Esophagus muscularis mucosa (tissue), 4 donors: ENCODE measurements at regions of chr5 and their contacts with region 1.

Region 1: GRCh38 chr5:81751009-81751835 is at the start of gene SSBP2:
- DNase-seq: peak; percentile 100
- H3K4me3 ChIP-seq: peak within 1 kb of the TSS; percentile 87 to 93 (median 93)
- H3K27ac ChIP-seq: peak within 1 kb of the TSS; percentile 96 to 100 (median 98)
- H3K4me1 ChIP-seq: peaks cover 35 to 81% (median 76%) of the 10 kb centered on the region in 4 donors
- H3K27me3 ChIP-seq: no peaks in the 10 kb centered on the region
- CTCF ChIP-seq: no peak
- EP300 ChIP-seq: peak; percentile 22
- POLR2A ChIP-seq: peak; percentile 77
- total RNA-seq, gene SSBP2: 62.9 to 97.2 (median 74.2) TPM

Region 2: GRCh38 chr5:81301271-81302015 is 449.8 kb before region 1 on chr5 and contains the start of gene ZCCHC9:
- intact Hi-C with region 1: loop called (anchors 10 kb)
- DNase-seq: peak; percentile 98
- H3K4me3 ChIP-seq: peak within 1 kb of the TSS; percentile 73 to 90 (median 78)
- H3K27ac ChIP-seq: peak within 1 kb of the TSS; percentile 87 to 92 (median 92)
- H3K4me1 ChIP-seq: peaks cover 17 to 49% (median 43%) of the 10 kb centered on the region in 4 donors
- H3K27me3 ChIP-seq: no peaks in the 10 kb centered on the region
- CTCF ChIP-seq: peak; percentile 14 to 38 (median 26)
- EP300 ChIP-seq: no peak
- POLR2A ChIP-seq: no peak
- total RNA-seq, gene ZCCHC9: 18.7 to 38.6 (median 22.8) TPM

Region 3: DNA sequence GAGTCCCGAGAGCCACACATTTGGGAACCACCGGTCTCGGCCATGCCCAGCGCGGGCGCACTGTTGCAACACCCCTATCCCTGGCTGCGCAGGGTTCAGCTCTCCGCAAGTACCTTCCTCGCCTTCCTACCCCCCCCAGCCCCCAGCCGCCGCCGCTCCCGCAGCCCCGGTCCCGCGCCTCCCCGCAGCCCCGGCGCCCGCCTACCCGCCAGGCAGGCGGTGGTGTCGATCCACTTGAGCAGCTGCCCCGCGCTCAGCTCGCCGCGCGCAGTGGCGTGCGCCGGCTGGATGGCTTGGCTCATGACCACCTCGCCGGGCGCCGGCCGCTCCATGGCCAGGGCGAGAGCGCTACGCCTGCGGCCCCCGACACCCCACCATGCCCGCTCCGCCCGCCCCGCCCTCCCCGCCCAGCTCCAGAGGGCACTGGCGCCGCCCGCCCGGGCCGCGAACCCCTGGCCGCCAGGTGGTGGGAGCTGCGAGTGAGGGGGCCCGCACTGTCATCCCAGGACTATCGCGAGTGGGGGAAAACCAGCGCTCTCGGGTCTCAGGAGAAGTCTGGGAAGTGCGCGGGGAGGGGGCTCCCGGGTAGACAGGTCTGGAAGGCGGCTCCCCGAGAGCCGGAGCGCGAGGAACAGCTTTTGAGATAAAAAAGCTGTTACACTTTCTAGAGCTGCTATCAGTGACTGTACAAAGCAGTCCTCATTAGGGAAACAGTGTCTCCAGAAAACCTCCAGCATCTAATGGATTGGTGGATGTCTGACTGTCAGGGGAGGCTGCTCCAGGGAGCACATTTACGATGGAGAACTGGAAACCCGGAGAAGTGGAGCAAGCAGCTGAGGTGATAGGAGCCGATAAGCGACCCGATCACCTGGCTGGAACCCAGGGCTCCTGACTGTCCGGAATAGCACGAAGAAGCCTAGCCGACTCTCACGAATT is 357.2 kb before region 1 on chr5 and contains the start of gene ACOT12:
- intact Hi-C with region 1: no loop called
- DNase-seq: no peak
- H3K4me3 ChIP-seq: peak within 1 kb of the TSS; percentile 44 to 62 (median 51)
- H3K27ac ChIP-seq: no peak within 1 kb of the TSS
- H3K4me1 ChIP-seq: peaks cover 10 to 18% (median 15%) of the 10 kb centered on the region in 4 donors
- H3K27me3 ChIP-seq: peaks cover 0 to 65% (median 24%) of the 10 kb centered on the region in 4 donors
- CTCF ChIP-seq: no peak
- EP300 ChIP-seq: no peak
- POLR2A ChIP-seq: no peak
- total RNA-seq, gene ACOT12: not detected

Region 4: GRCh38 chr5:81425569-81425968 is 325.7 kb before region 1 on chr5:
- intact Hi-C with region 1: loop called (anchors 5 kb)
- DNase-seq: no peak
- H3K4me3 ChIP-seq: no peak overlapping the region
- H3K27ac ChIP-seq: peak overlapping the region in 3 of 4 donors; percentile 25 to 43 (median 28)
- H3K4me1 ChIP-seq: peaks cover 15 to 27% (median 20%) of the 10 kb centered on the region in 4 donors
- H3K27me3 ChIP-seq: no peaks in the 10 kb centered on the region
- CTCF ChIP-seq: peak; percentile 62 to 64 (median 64)
- EP300 ChIP-seq: no peak
- POLR2A ChIP-seq: no peak

Region 5: GRCh38 chr5:81506900-81507588 is 244.2 kb before region 1 on chr5:
- intact Hi-C with region 1: loop called (anchors 2 kb)
- DNase-seq: no peak
- H3K4me3 ChIP-seq: no peak overlapping the region
- H3K27ac ChIP-seq: peak overlapping the region in 3 of 4 donors; percentile 8 to 34 (median 29)
- H3K4me1 ChIP-seq: peaks cover 10 to 25% (median 19%) of the 10 kb centered on the region in 4 donors
- H3K27me3 ChIP-seq: no peaks in the 10 kb centered on the region
- CTCF ChIP-seq: peak; percentile 88 to 94 (median 90)
- EP300 ChIP-seq: no peak
- POLR2A ChIP-seq: no peak

Region 6: DNA sequence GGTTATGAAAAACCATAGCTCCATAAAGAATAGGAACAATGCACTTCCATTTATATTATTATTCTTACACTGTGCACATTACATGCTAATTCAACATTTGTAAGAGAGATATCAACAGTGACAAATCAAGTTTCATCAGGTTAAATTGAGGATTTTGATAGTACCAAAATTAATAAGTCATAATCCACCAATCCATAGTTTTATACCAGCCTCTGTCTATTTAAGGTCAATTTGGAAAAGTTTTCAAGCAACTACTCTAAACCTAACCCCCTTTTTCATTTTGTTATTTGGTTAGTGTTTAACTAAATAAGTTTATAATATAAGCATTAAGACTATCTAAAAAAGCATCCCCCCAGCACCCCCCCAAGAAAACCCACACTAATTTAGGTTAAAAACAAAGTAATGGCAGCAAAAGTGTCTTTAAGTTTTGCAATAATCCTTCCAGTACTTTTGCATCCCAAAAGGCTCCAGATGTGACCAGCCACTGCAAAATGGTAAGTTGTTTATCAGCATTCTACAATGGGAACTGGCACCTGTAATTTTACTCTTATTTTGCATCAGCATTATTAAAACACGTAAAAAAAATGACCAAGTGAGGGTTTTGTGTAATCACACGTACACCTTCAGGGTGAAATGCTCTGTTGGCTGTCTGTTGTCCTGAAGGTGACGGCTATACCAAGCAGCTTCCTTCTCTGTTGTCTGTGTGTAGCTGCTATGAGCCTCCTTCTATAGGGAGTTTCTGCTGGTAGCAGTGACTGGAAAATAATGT is 36.4 kb after region 1 on chr5:
- intact Hi-C with region 1: loop called (anchors 2 kb)
- DNase-seq: no peak
- H3K4me3 ChIP-seq: peak overlapping the region; percentile 8 to 35 (median 22)
- H3K27ac ChIP-seq: peak overlapping the region; percentile 41 to 71 (median 58)
- H3K4me1 ChIP-seq: peaks cover 20 to 38% (median 36%) of the 10 kb centered on the region in 4 donors
- H3K27me3 ChIP-seq: no peaks in the 10 kb centered on the region
- CTCF ChIP-seq: no peak
- EP300 ChIP-seq: no peak
- POLR2A ChIP-seq: no peak

Region 7: DNA sequence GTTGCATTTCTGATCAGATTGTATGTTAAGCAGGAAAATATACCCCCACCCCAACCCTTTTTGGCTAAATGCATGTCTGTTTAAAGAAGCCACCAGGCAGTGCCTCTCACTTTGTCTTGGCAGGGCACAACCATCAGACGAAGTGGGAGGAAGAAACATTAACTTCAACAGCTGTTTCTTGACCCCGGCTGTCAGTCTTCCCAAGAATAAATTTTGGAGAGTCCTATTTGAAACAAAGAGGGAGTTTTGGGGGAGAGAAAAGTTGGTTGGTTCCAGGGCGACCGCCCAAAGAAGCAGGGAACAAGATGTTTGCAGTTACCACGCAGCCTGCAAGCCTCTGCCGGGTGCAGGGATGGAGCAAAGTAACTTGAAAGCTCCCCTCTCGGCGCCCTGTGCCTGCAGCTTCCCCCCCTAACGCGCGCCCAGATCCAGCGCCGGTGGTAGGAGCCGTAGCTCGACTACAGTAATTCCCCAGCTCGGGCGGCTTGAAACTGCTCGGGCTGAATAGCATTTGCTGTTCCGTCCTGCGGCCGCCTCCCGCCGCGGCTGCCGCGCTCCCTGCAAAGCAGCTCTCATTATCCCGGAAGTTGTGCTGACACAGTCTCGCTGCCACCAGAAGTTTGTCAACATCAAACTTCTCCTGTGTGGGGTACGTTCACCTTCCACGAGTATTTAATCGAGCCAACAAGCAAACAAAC is 100.4 kb after region 1 on chr5:
- intact Hi-C with region 1: loop called (anchors 1 kb)
- DNase-seq: peak; percentile 97
- H3K4me3 ChIP-seq: peak overlapping the region; percentile 52 to 67 (median 58)
- H3K27ac ChIP-seq: peak overlapping the region; percentile 80 to 91 (median 86)
- H3K4me1 ChIP-seq: peaks cover 39 to 85% (median 81%) of the 10 kb centered on the region in 4 donors
- H3K27me3 ChIP-seq: no peaks in the 10 kb centered on the region
- CTCF ChIP-seq: peak in 1 of 3 experiments; percentile 14
- EP300 ChIP-seq: peak; percentile 36
- POLR2A ChIP-seq: no peak

Region 8: DNA sequence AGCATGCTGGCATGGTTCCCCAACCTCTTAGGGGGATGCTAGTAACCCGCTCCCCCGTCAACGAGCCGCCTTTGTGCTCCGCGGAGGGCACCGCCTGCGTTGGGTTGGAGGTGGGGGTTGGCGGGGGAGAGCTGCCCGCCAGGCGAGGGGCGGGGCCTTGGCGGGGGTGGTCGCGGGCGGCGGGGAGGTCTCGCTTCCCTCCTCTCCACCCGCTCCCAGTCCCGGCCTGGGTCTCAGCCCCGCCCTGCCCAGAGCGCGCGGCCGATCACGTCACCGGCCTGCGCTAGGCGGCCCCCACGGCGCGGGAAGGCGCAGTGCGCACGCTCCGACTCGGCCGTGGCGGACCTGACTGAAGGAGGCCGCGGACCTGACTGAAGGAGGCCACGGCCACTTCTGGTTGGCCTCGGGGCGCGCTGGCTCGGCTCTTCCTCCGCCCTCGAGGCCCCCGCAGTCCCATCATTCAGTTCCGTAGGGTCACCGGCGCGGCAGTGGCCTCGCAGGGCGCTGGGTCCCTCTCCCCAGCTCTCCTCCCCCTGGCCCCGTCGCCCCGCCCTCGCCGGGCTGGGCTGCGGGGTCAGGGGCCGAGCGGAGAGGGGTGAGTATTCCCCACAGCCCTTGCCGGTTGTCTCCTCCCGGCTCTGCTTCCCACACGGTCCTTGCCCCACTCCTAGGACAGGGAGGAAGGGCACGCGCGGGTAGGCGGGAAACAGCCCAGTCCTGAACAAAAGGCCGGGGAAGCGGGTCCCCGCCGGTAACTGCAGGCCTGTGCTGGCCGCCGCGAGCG is 220.7 kb after region 1 on chr5 and contains the start of gene ATG10:
- intact Hi-C with region 1: loop called (anchors 5 kb)
- DNase-seq: peak; percentile 97
- H3K4me3 ChIP-seq: peak within 1 kb of the TSS; percentile 70 to 87 (median 82)
- H3K27ac ChIP-seq: peak within 1 kb of the TSS; percentile 98 to 99 (median 98)
- H3K4me1 ChIP-seq: peaks cover 0 to 16% (median 12%) of the 10 kb centered on the region in 4 donors
- H3K27me3 ChIP-seq: no peaks in the 10 kb centered on the region
- CTCF ChIP-seq: no peak
- EP300 ChIP-seq: no peak
- POLR2A ChIP-seq: peak; percentile 91
- total RNA-seq, gene ATG10: 5.2 to 9.1 (median 7.3) TPM